Heart right ventricle (tissue), 16 donors: ENCODE measurements at regions of chr2 and their contacts with region 1.

Region 1: GRCh38 chr2:11344342-11344955 is at the start of gene ROCK2:
- DNase-seq: peak; percentile 90
- ATAC-seq: peak; percentile 80 to 91 (median 84)
- H3K4me3 ChIP-seq: peak within 1 kb of the TSS; percentile 71 to 98 (median 94)
- H3K27ac ChIP-seq: peak within 1 kb of the TSS; percentile 95 to 100 (median 99)
- H3K4me1 ChIP-seq: peaks cover 0 to 56% (median 37%) of the 10 kb centered on the region in 9 donors
- H3K27me3 ChIP-seq: no peaks in the 10 kb centered on the region
- CTCF ChIP-seq: no peak
- total RNA-seq, gene ROCK2: 29.7 to 51.8 (median 38.5) TPM

Region 2: DNA sequence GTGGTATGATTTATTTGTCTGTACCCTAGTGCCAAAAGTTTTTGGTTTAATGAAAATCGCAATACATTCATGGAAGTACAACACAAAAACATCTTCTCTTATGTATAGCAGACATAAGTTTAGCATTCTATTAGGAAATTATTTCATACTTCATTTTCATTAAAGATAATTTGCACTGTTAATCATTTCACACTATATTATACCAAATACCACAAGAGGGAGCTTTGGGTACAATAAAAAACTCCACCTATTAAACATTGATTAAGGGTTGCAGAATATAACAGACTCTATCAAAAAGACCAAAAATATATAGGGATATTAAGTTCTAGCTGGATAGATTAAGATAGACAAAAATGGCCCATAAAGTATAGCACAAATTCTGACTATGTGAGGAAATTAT is 110.1 kb before region 1 on chr2:
- intact Hi-C with region 1: loop called in 5 of 10 experiments (anchors 2 to 10 kb)
- DNase-seq: no peak
- ATAC-seq: peak in 4 of 8 donors; percentile 37 to 51 (median 46)
- H3K4me3 ChIP-seq: no peak overlapping the region
- H3K27ac ChIP-seq: no peak overlapping the region
- H3K4me1 ChIP-seq: peaks cover 0 to 29% (median 16%) of the 10 kb centered on the region in 9 donors
- H3K27me3 ChIP-seq: no peaks in the 10 kb centered on the region
- CTCF ChIP-seq: peak; percentile 41 to 75 (median 57)

Region 3: DNA sequence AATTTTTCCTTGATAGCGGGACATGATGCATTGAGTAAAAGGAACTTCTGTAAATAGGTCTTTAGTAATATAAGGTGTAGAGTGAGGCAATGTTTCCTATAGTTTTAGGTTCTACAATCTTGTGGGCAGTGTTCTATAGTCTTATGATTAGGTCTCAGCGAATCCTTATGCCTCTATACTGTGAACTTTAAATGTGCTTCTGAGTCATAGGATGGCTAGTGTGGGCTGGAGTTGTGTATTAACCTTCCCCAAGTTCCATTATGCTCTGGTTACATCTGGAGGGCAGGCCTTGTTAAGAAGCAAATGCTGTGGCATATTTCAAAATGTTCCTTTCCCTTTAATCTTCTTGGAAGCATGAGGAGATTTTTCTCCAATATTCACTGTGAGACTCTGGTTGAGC is 73.6 kb before region 1 on chr2:
- intact Hi-C with region 1: loop called in 1 of 10 experiments (anchors 2 kb)
- DNase-seq: no peak
- ATAC-seq: no peak
- H3K4me3 ChIP-seq: no peak overlapping the region
- H3K27ac ChIP-seq: no peak overlapping the region
- H3K4me1 ChIP-seq: peaks cover 0 to 6% (median 0%) of the 10 kb centered on the region in 9 donors
- H3K27me3 ChIP-seq: no peaks in the 10 kb centered on the region
- CTCF ChIP-seq: no peak

Region 4: GRCh38 chr2:11320698-11321492 is 23.6 kb before region 1 on chr2:
- intact Hi-C with region 1: no loop called
- DNase-seq: no peak
- ATAC-seq: peak in 1 of 8 donors; percentile 12
- H3K4me3 ChIP-seq: no peak overlapping the region
- H3K27ac ChIP-seq: no peak overlapping the region
- H3K4me1 ChIP-seq: peaks cover 0 to 67% (median 32%) of the 10 kb centered on the region in 9 donors
- H3K27me3 ChIP-seq: no peaks in the 10 kb centered on the region
- CTCF ChIP-seq: peak in 1 of 9 donors; percentile 8

Region 5: GRCh38 chr2:11377928-11378545 is 33.6 kb after region 1 on chr2:
- intact Hi-C with region 1: loop called in 1 of 10 experiments (anchors 5 kb)
- DNase-seq: peak in 1 of 2 donors; percentile 33
- ATAC-seq: peak in 4 of 8 donors; percentile 11 to 57 (median 28)
- H3K4me3 ChIP-seq: peak overlapping the region in 6 of 10 donors; percentile 5 to 40 (median 30)
- H3K27ac ChIP-seq: peak overlapping the region; percentile 21 to 78 (median 70)
- H3K4me1 ChIP-seq: peaks cover 6 to 48% (median 27%) of the 10 kb centered on the region in 9 donors
- H3K27me3 ChIP-seq: no peaks in the 10 kb centered on the region
- CTCF ChIP-seq: no peak

Region 6: GRCh38 chr2:11404376-11405073 is 60.1 kb after region 1 on chr2:
- intact Hi-C with region 1: loop called in 5 of 10 experiments (anchors 5 kb)
- DNase-seq: no peak
- ATAC-seq: peak in 3 of 8 donors; percentile 28 to 46 (median 35)
- H3K4me3 ChIP-seq: no peak overlapping the region
- H3K27ac ChIP-seq: peak overlapping the region; percentile 34 to 89 (median 81)
- H3K4me1 ChIP-seq: peaks cover 0 to 49% (median 25%) of the 10 kb centered on the region in 9 donors
- H3K27me3 ChIP-seq: no peaks in the 10 kb centered on the region
- CTCF ChIP-seq: no peak